ENCODE measurements at regions of chr5 and their contacts with region 1.

Region 1: DNA sequence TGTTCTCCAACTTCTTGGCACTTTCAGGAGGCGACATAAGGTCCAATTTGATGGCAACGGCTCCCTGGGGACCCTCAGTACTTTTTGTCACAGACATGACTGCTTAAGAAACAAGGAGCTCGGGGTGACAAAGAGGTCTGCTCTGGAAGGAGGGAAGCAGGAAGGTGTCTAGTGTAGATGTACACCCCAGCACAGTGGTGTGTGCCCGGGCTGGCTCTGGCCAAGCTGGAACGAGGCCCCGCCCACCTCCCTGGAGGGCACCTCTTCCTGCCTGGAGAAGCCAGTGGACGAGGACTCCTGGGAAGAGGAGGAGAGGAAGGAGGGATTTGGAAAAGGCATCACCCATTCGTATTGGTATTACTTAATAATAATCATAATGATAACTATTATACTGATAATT is at the start of gene SLC36A2:
- DNase-seq: no peak
- H3K4me3 ChIP-seq: no peak within 1 kb of the TSS
- H3K27ac ChIP-seq: no peak within 1 kb of the TSS
- H3K4me1 ChIP-seq: peaks cover 4 to 22% (median 18%) of the 10 kb centered on the region in 4 experiments; a peak in 5 of 7 replicates
- H3K27me3 ChIP-seq: peaks cover 1 to 24% (median 15%) of the 10 kb centered on the region in 4 experiments; a peak in 6 of 7 replicates
- CTCF ChIP-seq: no peak
- EP300 ChIP-seq: no peak
- POLR2A ChIP-seq: no peak
- RAD21 ChIP-seq: no peak
- total RNA-seq, gene SLC36A2: not detected in 2 replicates

Region 2: DNA sequence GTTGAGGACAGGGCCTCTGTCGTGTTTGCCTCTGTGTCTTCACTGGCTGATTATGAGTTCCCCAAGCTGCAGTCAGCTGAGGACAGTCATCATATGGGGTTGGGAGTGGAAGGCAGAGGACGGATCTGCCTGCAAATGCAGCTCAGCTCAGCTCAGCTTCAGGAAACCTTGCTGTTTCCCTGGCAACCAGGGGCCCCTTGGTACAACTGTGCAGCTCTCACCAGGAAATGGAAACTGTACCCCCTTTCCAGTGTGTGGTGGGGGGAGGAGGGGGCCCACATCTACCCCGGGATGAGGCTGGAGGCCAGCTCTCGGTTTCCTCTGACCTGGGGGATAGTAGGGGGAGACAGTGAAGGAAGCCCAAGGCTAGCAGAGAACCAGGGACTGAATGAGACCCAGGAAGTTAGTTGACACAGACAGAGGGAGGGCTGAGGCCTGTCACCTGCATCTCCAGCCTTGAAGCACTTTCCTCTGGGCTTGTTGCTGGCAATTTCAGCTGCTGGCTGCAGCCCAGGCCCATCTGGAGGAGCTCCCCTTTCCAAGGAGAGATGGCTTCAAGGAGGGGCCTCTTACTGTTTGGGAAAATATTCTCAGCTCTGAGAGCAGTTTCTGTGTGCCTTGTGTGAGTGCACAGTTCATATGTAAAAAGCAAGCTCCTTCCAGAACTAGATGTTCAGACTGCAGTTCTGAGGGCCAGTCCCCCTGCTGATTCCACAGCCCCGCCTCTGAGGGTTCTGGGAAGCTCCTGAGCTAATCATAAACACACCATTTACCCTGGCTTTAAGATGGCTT is 196.7 kb before region 1 on chr5:
- CTCF ChIA-PET with region 1: no interaction called
- POLR2A ChIA-PET with region 1: no interaction called
- DNase-seq: no peak
- H3K4me3 ChIP-seq: no peak overlapping the region
- H3K27ac ChIP-seq: no peak overlapping the region
- H3K4me1 ChIP-seq: peaks cover 0 to 9% (median 4%) of the 10 kb centered on the region in 4 experiments; a peak in 4 of 7 replicates
- H3K27me3 ChIP-seq: no peaks in the 10 kb centered on the region
- CTCF ChIP-seq: no peak
- EP300 ChIP-seq: no peak
- POLR2A ChIP-seq: 0 out of 3 replicates have a peak, but pooled peaks of 1 of the 2 experiments have one; percentile 28
- RAD21 ChIP-seq: no peak

Region 3: GRCh38 chr5:151357801-151358200 is 10.4 kb after region 1 on chr5:
- CTCF ChIA-PET with region 1: interaction called, 18 read pairs
- POLR2A ChIA-PET with region 1: interaction called, 4 read pairs
- DNase-seq: no peak
- H3K4me3 ChIP-seq: peak overlapping the region in 1 of 4 experiments; percentile 18; a peak in 1 of 8 replicates
- H3K27ac ChIP-seq: no peak overlapping the region
- H3K4me1 ChIP-seq: peaks cover 0 to 14% (median 4%) of the 10 kb centered on the region in 4 experiments; a peak in 4 of 7 replicates
- H3K27me3 ChIP-seq: no peaks in the 10 kb centered on the region
- CTCF ChIP-seq: no peak
- EP300 ChIP-seq: no peak
- POLR2A ChIP-seq: no peak
- RAD21 ChIP-seq: no peak

Measured in H1 (cell line).